Endothelial cell of umbilical vein (primary cell): ENCODE measurements at regions of chr11 and their contacts with region 1.

Region 1: DNA sequence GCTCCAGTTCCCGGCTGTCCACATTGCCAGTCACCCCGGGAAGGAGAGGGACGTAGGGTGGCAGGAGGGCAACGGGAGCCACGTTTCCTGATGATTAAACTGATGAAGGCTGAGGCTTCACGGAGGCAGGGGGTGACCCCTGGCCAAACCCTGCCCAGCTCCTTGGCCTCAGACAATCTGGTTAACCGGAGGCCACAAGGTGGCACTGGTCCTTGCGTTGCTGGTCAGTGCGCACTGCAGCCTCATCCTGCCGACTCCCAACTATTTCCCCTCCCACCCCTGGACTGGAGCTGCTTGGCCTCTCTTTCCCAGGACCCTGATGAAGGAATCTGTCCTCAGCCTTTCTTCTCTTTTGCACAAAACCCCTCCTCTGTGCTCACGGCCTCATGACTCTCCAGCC is 75.3 kb downstream of the PDE2A start:
- DNase-seq: peak; percentile 44
- H3K4me3 ChIP-seq: no peak overlapping the region
- H3K27ac ChIP-seq: no peak overlapping the region
- H3K4me1 ChIP-seq: no peaks in the 10 kb centered on the region
- H3K27me3 ChIP-seq: no peaks in the 10 kb centered on the region
- CTCF ChIP-seq: peak; percentile 59 to 85
- POLR2A ChIP-seq: no peak

Region 2: GRCh38 chr11:72507050-72507449 is 91.9 kb before region 1 on chr11:
- CTCF ChIA-PET with region 1: no interaction called
- POLR2A ChIA-PET with region 1: no interaction called
- dilution Hi-C with region 1: no loop called
- intact Hi-C with region 1: no loop called
- DNase-seq: no peak
- H3K4me3 ChIP-seq: no peak overlapping the region
- H3K27ac ChIP-seq: no peak overlapping the region
- H3K4me1 ChIP-seq: no peaks in the 10 kb centered on the region
- H3K27me3 ChIP-seq: peaks cover 0 to 3% of the 10 kb centered on the region in 2 experiments
- CTCF ChIP-seq: no peak
- POLR2A ChIP-seq: no peak

Region 3: DNA sequence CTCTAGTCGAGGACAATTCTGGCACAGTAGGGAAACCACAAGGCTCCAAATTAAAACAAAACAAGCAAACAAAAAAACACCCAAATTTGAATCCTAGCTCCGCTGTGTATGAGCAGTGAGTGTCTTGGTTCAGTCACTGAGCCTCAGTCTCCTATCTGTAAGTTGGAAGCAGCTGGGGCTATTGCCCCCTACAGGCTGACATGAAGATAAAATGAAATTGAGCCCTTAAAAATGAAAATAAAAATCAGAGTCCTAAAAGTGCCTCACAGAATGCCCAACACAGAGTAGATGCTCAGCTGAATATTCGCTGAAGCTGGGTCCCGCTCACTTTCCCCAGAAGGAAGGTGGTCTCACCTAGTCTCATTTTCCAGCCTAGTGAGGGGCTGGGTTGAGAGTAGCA is 10.1 kb after region 1 on chr11:
- CTCF ChIA-PET with region 1: interaction called, 42 read pairs
- POLR2A ChIA-PET with region 1: no interaction called
- dilution Hi-C with region 1: no loop called
- intact Hi-C with region 1: no loop called
- DNase-seq: peak; percentile 21
- H3K4me3 ChIP-seq: no peak overlapping the region
- H3K27ac ChIP-seq: no peak overlapping the region
- H3K4me1 ChIP-seq: no peaks in the 10 kb centered on the region
- H3K27me3 ChIP-seq: no peaks in the 10 kb centered on the region
- CTCF ChIP-seq: peak; percentile 56 to 58
- POLR2A ChIP-seq: no peak

Region 4: GRCh38 chr11:72631806-72632731 is 33.2 kb after region 1 on chr11:
- CTCF ChIA-PET with region 1: interaction called, 61 read pairs
- POLR2A ChIA-PET with region 1: no interaction called
- dilution Hi-C with region 1: no loop called
- intact Hi-C with region 1: no loop called
- DNase-seq: peak; percentile 86
- H3K4me3 ChIP-seq: no peak overlapping the region
- H3K27ac ChIP-seq: peak overlapping the region; percentile 83
- H3K4me1 ChIP-seq: peaks cover 38% of the 10 kb centered on the region
- H3K27me3 ChIP-seq: no peaks in the 10 kb centered on the region
- CTCF ChIP-seq: no peak
- POLR2A ChIP-seq: peak; percentile 76

Region 5: GRCh38 chr11:72652873-72653630 is 54.1 kb after region 1 on chr11:
- CTCF ChIA-PET with region 1: interaction called, 13 read pairs
- POLR2A ChIA-PET with region 1: no interaction called
- dilution Hi-C with region 1: no loop called
- intact Hi-C with region 1: no loop called
- DNase-seq: no peak
- H3K4me3 ChIP-seq: no peak overlapping the region
- H3K27ac ChIP-seq: no peak overlapping the region
- H3K4me1 ChIP-seq: no peaks in the 10 kb centered on the region
- H3K27me3 ChIP-seq: no peaks in the 10 kb centered on the region
- CTCF ChIP-seq: no peak
- POLR2A ChIP-seq: no peak

Region 6: DNA sequence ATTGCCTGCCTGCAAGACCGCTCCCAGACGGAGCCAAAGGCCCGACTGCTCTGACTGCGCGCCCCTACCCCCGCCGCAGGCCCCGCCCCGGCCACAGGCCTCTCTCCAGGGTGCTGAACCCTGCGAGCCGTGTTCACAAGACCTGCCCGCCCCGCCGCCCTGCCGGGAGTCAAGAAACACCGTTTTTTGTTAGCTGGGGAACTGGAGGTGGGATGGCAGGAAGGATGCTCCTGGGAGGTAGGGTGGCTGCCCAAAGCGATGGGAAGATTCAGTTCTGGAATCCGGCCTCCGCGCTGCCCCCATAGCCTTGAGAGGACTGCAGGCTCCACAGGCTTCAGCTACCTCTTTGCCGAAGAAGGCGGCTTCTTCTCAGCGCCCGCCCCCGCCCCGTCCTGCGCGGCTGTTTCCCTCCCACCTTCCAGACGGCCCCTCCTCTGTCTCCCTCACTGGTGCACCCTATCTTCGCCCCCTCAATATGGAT is 78.0 kb after region 1 on chr11:
- CTCF ChIA-PET with region 1: interaction called, 166 read pairs
- POLR2A ChIA-PET with region 1: no interaction called
- dilution Hi-C with region 1: no loop called
- intact Hi-C with region 1: no loop called
- DNase-seq: peak; percentile 58
- H3K4me3 ChIP-seq: no peak overlapping the region
- H3K27ac ChIP-seq: no peak overlapping the region
- H3K4me1 ChIP-seq: no peaks in the 10 kb centered on the region
- H3K27me3 ChIP-seq: peaks cover 35 to 45% of the 10 kb centered on the region in 2 experiments
- CTCF ChIP-seq: no peak
- POLR2A ChIP-seq: no peak